Natural killer cell (primary cell): ENCODE measurements at regions of chr6 and their contacts with region 1.

Region 1: DNA sequence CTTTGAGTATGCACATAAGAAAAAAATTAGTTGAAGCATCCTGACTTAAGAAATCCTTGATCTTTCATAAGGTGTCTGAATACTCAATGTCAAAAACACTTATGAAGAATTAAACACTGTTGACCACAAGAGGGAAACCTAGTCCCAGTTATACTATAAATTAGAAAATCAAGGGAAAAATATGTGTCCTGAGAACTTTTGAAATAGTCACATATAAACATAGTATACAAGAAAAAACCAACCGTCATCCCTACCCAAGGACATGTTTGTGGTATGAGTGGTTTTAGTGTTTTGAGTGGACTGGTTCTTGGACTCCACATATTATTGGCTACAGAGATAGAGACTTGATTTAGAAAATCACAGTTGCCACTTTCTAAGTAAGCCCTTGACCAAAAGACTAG is 7.6 kb upstream of the HLA-DRA start:
- DNase-seq: peak in 1 of 2 donors; percentile 66
- ATAC-seq: peak in 2 of 3 donors; percentile 36 to 53
- H3K4me3 ChIP-seq: no peak overlapping the region
- H3K4me3 Mint-ChIP-seq: no peak overlapping the region
- H3K27ac ChIP-seq: no peak overlapping the region
- H3K27ac Mint-ChIP-seq: no peak overlapping the region
- H3K4me1 ChIP-seq: peaks cover 2% of the 10 kb centered on the region
- H3K4me1 Mint-ChIP-seq: no peaks in the 10 kb centered on the region
- H3K27me3 ChIP-seq: no peaks in the 10 kb centered on the region
- H3K27me3 Mint-ChIP-seq: peaks cover 7 to 12% of the 10 kb centered on the region in 2 donors
- CTCF ChIP-seq: peak; percentile 72

Region 2: GRCh38 chr6:32692019-32692418 is 260.0 kb after region 1 on chr6:
- intact Hi-C with region 1: loop called (anchors 1 kb)
- DNase-seq: peak; percentile 31 to 82
- ATAC-seq: peak in 2 of 3 donors; percentile 74 to 94
- H3K4me3 ChIP-seq: no peak overlapping the region
- H3K4me3 Mint-ChIP-seq: no peak overlapping the region
- H3K27ac ChIP-seq: no peak overlapping the region
- H3K27ac Mint-ChIP-seq: no peak overlapping the region
- H3K4me1 ChIP-seq: peaks cover 4% of the 10 kb centered on the region
- H3K4me1 Mint-ChIP-seq: peaks cover 10% of the 10 kb centered on the region in 2 donors
- H3K27me3 ChIP-seq: no peaks in the 10 kb centered on the region
- H3K27me3 Mint-ChIP-seq: peaks cover 24 to 47% of the 10 kb centered on the region in 2 donors
- CTCF ChIP-seq: peak; percentile 63

Region 3: DNA sequence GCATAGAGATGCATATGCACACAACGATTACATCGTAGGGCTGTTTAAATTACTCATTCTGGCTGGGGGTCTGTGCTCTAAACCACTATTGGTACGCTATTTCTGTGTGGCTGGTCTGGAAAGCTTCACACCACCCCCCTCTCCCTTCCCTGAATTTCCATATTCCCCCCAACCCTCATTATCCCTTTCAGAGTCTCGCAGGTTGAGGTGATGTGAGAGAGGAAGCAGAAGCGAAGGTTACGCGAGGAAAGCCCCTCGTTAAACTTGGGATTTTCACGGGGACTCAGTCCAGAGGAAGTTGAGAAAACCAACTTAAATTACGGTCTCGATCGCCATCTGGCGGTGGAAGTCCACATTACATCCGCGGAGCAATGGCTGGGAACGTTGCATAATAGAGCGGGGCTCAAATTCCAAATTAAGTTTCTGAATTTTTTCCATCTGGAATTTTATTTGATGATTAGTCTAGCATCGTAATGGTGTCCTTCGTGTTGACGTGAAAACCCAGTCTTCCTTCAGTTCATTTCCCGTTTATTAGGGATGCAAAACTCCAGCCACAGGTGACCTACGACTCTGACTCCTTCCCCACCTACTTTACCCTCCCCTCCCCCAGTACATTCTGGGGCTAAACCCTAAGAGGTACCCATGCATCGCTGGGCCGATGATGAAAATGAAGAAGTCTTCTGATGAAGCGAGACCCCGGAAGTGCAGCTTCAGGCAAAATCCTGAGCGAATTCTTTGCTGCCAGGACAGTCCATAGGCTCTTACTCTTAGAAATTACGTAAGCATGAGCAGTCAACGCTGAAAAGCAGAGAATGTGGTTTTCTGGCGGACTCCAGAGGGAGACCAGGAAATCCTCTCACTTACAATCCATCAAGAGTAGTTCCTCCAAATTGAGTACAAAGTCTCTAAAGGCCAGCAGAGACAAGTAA is 365.1 kb after region 1 on chr6:
- intact Hi-C with region 1: loop called (anchors 5 kb)
- DNase-seq: peak; percentile 79 to 89
- ATAC-seq: peak; percentile 85 to 91 (median 88)
- H3K4me3 ChIP-seq: no peak overlapping the region
- H3K4me3 Mint-ChIP-seq: peak overlapping the region; percentile 18
- H3K27ac ChIP-seq: no peak overlapping the region
- H3K27ac Mint-ChIP-seq: peak overlapping the region in 1 of 2 donors; percentile 56
- H3K4me1 ChIP-seq: peaks cover 12% of the 10 kb centered on the region
- H3K4me1 Mint-ChIP-seq: peaks cover 0 to 11% of the 10 kb centered on the region in 2 donors
- H3K27me3 ChIP-seq: peaks cover 9% of the 10 kb centered on the region
- H3K27me3 Mint-ChIP-seq: peaks cover 43 to 70% of the 10 kb centered on the region in 2 donors
- CTCF ChIP-seq: peak; percentile 94